ENCODE measurements at regions of chr21 and their contacts with region 1.

Region 1: DNA sequence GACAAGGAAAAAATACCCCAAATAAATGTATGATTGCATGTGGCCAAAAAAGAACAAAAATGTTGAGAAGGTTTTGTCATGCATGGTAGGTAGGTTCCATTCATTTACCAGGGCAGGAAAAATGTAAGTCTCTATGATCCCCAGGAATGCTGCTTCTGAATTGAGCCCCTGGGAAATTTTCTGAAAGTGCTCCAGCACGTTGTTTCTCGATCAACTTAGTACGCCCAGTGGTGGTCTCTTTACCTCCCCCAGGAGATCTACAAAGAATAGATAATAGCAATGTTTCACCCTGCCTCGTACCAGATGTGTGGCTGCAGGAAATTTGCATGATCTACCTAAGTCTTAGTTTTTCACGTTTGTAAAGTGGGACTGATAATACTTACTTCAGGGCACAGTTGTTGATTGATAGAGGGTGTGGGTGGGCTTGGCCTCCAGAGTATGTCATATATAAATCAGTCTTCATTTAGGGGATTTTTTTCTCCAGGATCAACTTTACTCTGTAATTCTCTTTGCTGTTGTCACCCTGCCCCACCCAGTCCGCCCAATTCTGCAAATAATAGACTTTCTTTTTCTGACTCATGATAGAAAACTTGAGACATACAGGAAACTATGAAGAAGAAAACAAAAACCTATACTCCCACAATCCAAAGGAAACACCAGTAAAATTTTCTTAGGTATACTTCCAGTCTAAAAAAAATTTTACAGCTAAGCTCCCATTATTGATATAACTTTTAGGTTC is 462.0 kb upstream of the RUNX1 start:
- DNase-seq: no peak
- H3K4me3 Mint-ChIP-seq: peak overlapping the region; percentile 30
- H3K27ac Mint-ChIP-seq: peak overlapping the region; percentile 42
- H3K4me1 Mint-ChIP-seq: peaks cover 36% of the 10 kb centered on the region
- H3K27me3 Mint-ChIP-seq: no peaks in the 10 kb centered on the region

Region 2: DNA sequence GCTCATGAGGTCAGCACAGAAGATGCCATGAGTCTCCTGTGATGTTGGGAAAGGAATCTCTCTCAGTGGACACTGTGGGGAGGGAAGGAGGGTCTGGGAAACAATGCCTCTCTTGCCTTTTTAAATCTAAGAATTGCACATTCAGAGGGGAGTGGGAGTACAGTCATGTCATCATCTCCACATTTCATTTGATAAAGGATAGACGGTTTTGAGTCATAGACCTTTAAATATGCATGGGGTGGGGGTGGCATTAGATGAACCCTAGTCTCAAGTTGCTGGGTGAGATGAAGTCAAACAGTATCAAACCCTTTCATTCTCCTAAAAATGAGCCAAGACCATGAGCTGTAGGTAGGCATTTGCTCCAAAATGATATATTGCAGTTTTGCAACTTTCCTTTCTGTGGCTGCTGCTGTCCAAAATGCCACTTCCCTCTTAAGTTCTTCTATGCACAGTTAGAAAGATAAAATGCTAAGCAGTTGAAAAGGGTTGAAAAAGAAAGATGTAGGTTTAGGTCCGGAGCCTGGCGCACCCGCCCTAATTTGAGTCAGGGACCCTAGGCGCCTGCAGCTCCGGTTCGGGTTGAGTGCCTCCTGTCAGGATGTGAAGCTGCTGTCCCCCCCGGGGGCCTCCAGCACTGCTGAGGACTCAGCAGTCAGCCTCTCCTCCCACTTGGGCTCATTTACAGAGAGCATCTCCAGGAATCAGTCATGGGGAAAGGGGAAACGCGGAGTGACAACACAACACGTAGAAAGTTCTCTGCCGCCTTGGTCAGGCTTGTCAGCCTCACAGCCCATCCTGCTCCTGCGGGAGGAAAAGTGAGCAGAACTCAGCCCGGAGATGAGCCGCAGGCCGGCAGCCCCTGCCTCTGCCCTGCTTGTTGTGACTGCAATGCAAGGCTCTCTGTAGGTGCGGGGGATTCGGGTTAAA is 17.3 kb after region 1 on chr21:
- intact Hi-C with region 1: loop called (anchors 1 kb)
- DNase-seq: peak; percentile 82
- H3K4me3 Mint-ChIP-seq: peak overlapping the region; percentile 86
- H3K27ac Mint-ChIP-seq: peak overlapping the region; percentile 94
- H3K4me1 Mint-ChIP-seq: peaks cover 49% of the 10 kb centered on the region
- H3K27me3 Mint-ChIP-seq: no peaks in the 10 kb centered on the region

Region 3: DNA sequence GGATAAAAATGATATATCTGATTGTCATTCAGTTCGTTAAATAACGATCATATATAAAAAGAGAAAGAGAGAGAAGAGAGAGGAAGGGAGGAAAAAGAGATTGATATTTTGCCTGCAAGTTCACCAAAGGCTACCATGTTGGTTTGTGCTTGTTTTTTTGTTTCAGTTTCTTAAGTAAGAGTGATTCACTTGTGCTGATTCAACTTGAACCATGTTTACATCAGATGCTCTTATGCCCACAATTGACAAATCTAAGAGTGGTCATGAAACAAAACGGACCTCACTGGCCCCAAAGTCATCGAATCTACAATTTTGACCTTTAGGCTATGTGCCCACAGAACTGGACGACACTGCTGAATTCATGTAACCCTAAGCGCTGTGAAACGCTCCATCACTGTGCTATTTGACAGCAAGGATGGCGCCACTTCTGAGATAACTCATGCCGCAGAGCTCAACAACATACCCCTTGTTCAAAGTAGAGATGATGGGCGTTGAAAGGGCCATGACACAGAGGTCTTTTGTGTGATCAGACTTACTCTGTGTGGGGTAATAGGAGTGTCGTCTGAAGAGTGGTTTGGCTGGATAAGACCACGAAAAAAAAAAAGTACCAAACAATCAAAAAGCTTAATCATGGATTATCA is 67.8 kb after region 1 on chr21:
- intact Hi-C with region 1: loop called (anchors 1 kb)
- DNase-seq: no peak
- H3K4me3 Mint-ChIP-seq: no peak overlapping the region
- H3K27ac Mint-ChIP-seq: peak overlapping the region; percentile 66
- H3K4me1 Mint-ChIP-seq: peaks cover 12% of the 10 kb centered on the region
- H3K27me3 Mint-ChIP-seq: peaks cover 3% of the 10 kb centered on the region

Region 4: DNA sequence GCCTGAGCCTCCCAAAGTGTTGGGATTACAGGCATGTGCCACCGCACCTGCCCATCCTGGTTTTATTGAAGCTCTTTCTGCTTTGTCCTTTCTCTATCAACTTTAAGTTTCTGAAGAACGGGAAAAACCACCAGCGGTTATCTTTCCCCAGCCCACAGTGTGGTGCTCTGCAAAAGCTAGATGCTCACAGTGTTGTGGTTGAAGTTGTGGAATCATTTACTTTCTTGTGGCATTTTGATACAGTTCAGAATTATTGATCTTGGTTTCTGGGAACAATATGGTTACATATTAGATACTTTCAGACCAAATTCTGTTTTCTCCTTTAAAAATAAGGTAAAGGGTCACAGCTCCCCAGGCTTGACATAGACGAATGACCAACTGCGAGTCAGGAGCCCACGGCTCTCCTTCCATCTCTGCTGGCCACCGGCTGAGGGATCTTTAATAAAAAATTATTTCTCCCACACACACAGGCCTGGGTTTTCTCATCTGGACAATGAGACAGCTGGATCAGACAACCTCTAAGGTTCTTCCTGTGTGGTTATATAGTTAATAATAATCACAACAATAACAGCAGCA is 163.9 kb after region 1 on chr21:
- intact Hi-C with region 1: no loop called
- DNase-seq: no peak
- H3K4me3 Mint-ChIP-seq: no peak overlapping the region
- H3K27ac Mint-ChIP-seq: no peak overlapping the region
- H3K4me1 Mint-ChIP-seq: peaks cover 6% of the 10 kb centered on the region
- H3K27me3 Mint-ChIP-seq: peaks cover 13% of the 10 kb centered on the region

Measured in activated CD4-positive, alpha-beta T cell treated with anti-CD3 and anti-CD28 coated beads, Interleukin-2, amount 10 ng/mL, durations not matched to agents 24 days and 14 days (primary cell).